Heart left ventricle (tissue), 16 donors: ENCODE measurements at regions of chr2 and their contacts with region 1.

Region 1: GRCh38 chr2:39379643-39380524 is 57.2 kb downstream of the MAP4K3 start:
- DNase-seq: peak in 1 of 5 donors; percentile 22
- ATAC-seq: peak; percentile 62 to 81 (median 75)
- H3K4me3 ChIP-seq: peak overlapping the region in 2 of 12 donors; percentile 1 to 10
- H3K27ac ChIP-seq: peak overlapping the region; percentile 27 to 83 (median 55)
- H3K4me1 ChIP-seq: peaks cover 4 to 61% (median 46%) of the 10 kb centered on the region in 12 donors
- H3K27me3 ChIP-seq: no peaks in the 10 kb centered on the region
- CTCF ChIP-seq: peak; percentile 47 to 82 (median 63)
- POLR2A ChIP-seq: no peak

Region 2: GRCh38 chr2:39431592-39432316 is 51.9 kb after region 1 on chr2:
- intact Hi-C with region 1: loop called in 8 of 10 experiments (anchors 2 to 10 kb)
- DNase-seq: no peak
- ATAC-seq: peak in 2 of 4 donors; percentile 38 to 55
- H3K4me3 ChIP-seq: no peak overlapping the region
- H3K27ac ChIP-seq: peak overlapping the region in 3 of 12 donors; percentile 9 to 25 (median 16)
- H3K4me1 ChIP-seq: peaks cover 3 to 83% (median 59%) of the 10 kb centered on the region in 12 donors
- H3K27me3 ChIP-seq: no peaks in the 10 kb centered on the region
- CTCF ChIP-seq: no peak
- POLR2A ChIP-seq: no peak

Region 3: DNA sequence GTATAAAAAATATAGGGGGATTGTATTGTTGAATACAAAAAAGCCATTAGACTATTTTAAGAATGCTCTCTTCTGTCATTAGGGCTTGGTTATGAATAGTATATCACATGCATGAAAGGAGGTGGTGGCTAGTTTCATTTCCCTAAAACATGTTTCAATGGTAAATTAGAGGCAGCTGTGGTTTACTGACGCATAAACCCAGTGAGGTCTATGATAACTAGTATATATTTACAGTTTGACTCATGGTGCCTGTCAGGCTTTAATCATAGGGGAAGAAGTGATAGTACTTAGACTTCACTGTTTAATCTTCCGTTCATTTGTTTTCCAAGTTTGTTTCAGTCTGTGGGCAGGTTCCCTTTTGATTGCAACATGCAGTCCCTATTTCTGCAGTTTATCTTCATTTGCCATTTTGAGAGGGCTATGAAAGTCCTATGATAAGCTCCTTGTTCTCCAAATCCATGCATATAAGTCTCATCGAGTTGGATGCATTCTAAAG is 112.3 kb after region 1 on chr2:
- intact Hi-C with region 1: loop called in 2 of 10 experiments (anchors 5 kb)
- DNase-seq: no peak
- ATAC-seq: peak; percentile 70 to 88 (median 84)
- H3K4me3 ChIP-seq: peak overlapping the region in 1 of 12 donors; percentile 5
- H3K27ac ChIP-seq: peak overlapping the region; percentile 5 to 91 (median 60)
- H3K4me1 ChIP-seq: peaks cover 0 to 65% (median 25%) of the 10 kb centered on the region in 12 donors
- H3K27me3 ChIP-seq: no peaks in the 10 kb centered on the region
- CTCF ChIP-seq: no peak
- POLR2A ChIP-seq: no peak

Region 4: GRCh38 chr2:39513641-39514094 is 133.8 kb after region 1 on chr2:
- intact Hi-C with region 1: loop called in 9 of 10 experiments (anchors 2 to 10 kb)
- DNase-seq: peak in 4 of 5 donors; percentile 62 to 77 (median 70)
- ATAC-seq: peak; percentile 36 to 77 (median 76)
- H3K4me3 ChIP-seq: no peak overlapping the region
- H3K27ac ChIP-seq: peak overlapping the region in 11 of 12 donors; percentile 38 to 89 (median 76)
- H3K4me1 ChIP-seq: peaks cover 16 to 100% (median 85%) of the 10 kb centered on the region in 12 donors
- H3K27me3 ChIP-seq: no peaks in the 10 kb centered on the region
- CTCF ChIP-seq: peak; percentile 51 to 78 (median 62)
- POLR2A ChIP-seq: no peak

Region 5: GRCh38 chr2:39696838-39697237 is 317.0 kb after region 1 on chr2:
- intact Hi-C with region 1: loop called (anchors 1 to 10 kb)
- DNase-seq: no peak
- ATAC-seq: peak; percentile 47 to 77 (median 70)
- H3K4me3 ChIP-seq: no peak overlapping the region
- H3K27ac ChIP-seq: peak overlapping the region in 11 of 12 donors; percentile 33 to 60 (median 47)
- H3K4me1 ChIP-seq: peaks cover 0 to 31% (median 14%) of the 10 kb centered on the region in 12 donors
- H3K27me3 ChIP-seq: no peaks in the 10 kb centered on the region
- CTCF ChIP-seq: peak; percentile 19 to 67 (median 56)
- POLR2A ChIP-seq: no peak